Heart left ventricle (tissue), 16 donors: ENCODE measurements at regions of chr11 and their contacts with region 1.

Region 1: GRCh38 chr11:34667810-34668582 is 47.1 kb downstream of the EHF start:
- DNase-seq: no peak
- ATAC-seq: no peak
- H3K4me3 ChIP-seq: no peak overlapping the region
- H3K27ac ChIP-seq: no peak overlapping the region
- H3K4me1 ChIP-seq: no peaks in the 10 kb centered on the region
- H3K27me3 ChIP-seq: no peaks in the 10 kb centered on the region
- CTCF ChIP-seq: no peak
- POLR2A ChIP-seq: no peak

Region 2: DNA sequence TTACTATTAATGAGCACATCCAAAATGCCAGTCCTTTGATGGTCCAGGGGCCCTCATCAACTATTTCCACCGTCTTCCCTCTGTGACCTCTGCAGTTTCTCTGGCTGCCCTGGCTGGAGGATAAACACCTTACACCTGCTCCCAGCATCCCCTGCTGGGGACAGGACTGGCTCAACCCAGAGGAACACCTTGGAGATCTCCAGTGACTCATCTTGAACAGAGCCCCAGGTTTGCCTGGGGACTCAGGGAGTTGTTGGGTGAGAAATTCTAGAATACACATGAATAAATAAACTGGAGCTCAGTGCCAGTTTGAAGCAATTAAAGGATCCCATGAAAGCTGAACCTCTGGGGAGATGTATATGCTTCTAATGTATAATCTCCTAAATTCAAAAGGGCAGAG is 130.3 kb before region 1 on chr11:
- intact Hi-C with region 1: no loop called
- DNase-seq: no peak
- ATAC-seq: no peak
- H3K4me3 ChIP-seq: no peak overlapping the region
- H3K27ac ChIP-seq: no peak overlapping the region
- H3K4me1 ChIP-seq: no peaks in the 10 kb centered on the region
- H3K27me3 ChIP-seq: peaks cover 0 to 19% (median 7%) of the 10 kb centered on the region in 9 donors
- CTCF ChIP-seq: no peak
- POLR2A ChIP-seq: no peak

Region 3: DNA sequence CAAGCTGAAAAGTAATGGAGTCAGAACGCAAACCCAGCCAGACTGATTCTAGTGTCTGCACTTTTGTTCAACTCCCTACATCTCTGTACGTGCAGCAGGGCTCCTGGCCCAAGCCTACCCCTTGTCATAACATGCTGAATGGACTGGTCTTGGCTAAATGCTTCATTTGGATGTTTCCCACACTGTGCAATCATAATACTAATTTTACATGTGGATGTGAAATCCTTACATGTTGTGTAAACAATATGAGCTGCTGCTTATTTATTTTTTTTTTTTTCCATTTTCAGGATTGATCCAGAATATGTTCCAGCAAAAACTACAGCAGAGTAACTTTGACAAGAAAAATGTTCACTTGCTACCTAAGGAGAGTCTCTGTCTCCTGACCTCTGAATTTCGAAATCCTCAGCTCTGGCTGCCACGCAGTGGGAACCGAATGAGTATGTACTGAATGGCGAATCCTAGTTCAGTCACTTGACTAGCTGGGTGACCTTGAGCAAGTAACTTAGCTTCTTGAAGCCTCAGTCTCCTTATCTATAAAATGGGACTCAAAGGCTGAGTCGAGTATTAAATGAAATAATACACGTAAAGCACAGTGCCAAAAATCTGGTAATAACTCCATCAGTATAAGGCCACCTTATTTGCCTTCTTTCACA is 86.3 kb after region 1 on chr11:
- intact Hi-C with region 1: no loop called
- DNase-seq: no peak
- ATAC-seq: no peak
- H3K4me3 ChIP-seq: no peak overlapping the region
- H3K27ac ChIP-seq: no peak overlapping the region
- H3K4me1 ChIP-seq: peaks cover 0 to 9% (median 0%) of the 10 kb centered on the region in 12 donors
- H3K27me3 ChIP-seq: peaks cover 0 to 6% (median 0%) of the 10 kb centered on the region in 9 donors
- CTCF ChIP-seq: no peak
- POLR2A ChIP-seq: no peak

Region 4: GRCh38 chr11:34791780-34792542 is 124.0 kb after region 1 on chr11:
- intact Hi-C with region 1: loop called in 1 of 10 experiments (anchors 10 kb)
- DNase-seq: no peak
- ATAC-seq: peak in 1 of 4 donors; percentile 33
- H3K4me3 ChIP-seq: no peak overlapping the region
- H3K27ac ChIP-seq: no peak overlapping the region
- H3K4me1 ChIP-seq: peaks cover 0 to 11% (median 0%) of the 10 kb centered on the region in 12 donors
- H3K27me3 ChIP-seq: no peaks in the 10 kb centered on the region
- CTCF ChIP-seq: peak in 1 of 12 donors; percentile 11
- POLR2A ChIP-seq: no peak